ENCODE measurements at regions of chr1 and their contacts with region 1.

Region 1: GRCh38 chr1:183685112-183685713 is 32.1 kb upstream of the APOBEC4 start:
- DNase-seq: peak; percentile 45
- ATAC-seq: peak; percentile 83
- H3K4me3 ChIP-seq: no peak overlapping the region
- H3K27ac ChIP-seq: no peak overlapping the region
- H3K4me1 ChIP-seq: no peaks in the 10 kb centered on the region
- H3K27me3 ChIP-seq: no peaks in the 10 kb centered on the region
- CTCF ChIP-seq: peak; percentile 65 to 83 (median 75)
- POLR2A ChIP-seq: no peak
- RAD21 ChIP-seq: peak; percentile 83

Region 2: DNA sequence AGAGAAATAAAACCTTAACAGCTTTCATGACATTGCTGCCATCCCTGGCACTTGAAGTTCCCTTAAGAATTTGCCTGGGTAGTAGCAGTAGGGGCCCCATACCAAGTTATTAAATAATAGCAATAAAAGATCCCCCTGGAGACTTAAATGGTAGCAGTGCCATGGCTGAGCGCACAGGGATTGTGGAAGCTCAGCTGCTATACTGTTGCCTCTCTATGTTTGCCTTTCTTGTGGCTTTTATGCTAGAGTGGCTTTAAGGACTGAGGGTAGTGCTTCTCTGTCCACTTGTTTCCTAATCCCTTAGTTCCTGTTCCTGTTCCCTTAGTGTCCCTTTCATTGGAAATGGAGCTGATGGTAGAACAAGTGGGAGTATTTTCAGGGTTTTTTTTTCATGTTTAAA is 137.1 kb before region 1 on chr1:
- CTCF ChIA-PET with region 1: no interaction called
- POLR2A ChIA-PET with region 1: no interaction called
- RAD21 ChIA-PET with region 1: no interaction called
- intact Hi-C with region 1: no loop called
- DNase-seq: no peak
- ATAC-seq: no peak
- H3K4me3 ChIP-seq: no peak overlapping the region
- H3K27ac ChIP-seq: no peak overlapping the region
- H3K4me1 ChIP-seq: peaks cover 0 to 3% of the 10 kb centered on the region in 2 experiments; a peak in 1 of 4 replicates
- H3K27me3 ChIP-seq: no peaks in the 10 kb centered on the region
- CTCF ChIP-seq: no peak
- POLR2A ChIP-seq: no peak
- RAD21 ChIP-seq: no peak

Region 3: DNA sequence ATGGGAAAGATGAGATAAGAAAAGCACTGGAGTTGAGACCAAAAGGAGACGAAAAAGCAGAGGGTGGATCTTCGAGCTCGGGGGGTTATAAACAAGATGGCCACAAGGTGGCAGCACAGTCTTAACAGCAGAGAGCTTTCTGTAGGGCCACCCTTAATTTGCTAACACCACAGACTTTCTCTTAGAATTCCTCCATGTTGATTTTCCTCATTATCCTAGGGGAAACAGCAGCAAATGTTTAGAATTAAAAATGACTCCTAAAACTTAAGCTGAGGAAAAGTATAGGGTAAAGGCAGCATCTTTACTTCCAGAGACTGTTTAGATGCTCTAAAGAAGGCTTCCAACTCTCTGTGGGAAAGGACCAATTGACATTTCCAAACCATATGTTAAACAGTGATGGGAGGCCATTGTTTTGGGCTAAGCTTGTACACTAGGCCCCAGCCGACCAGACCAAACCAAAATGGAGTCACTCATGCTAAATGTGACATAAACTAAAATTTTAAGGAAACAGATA is 29.6 kb before region 1 on chr1:
- CTCF ChIA-PET with region 1: interaction called, 40 read pairs
- POLR2A ChIA-PET with region 1: interaction called, 3 read pairs
- RAD21 ChIA-PET with region 1: interaction called in 1 of 2 experiments, 3 read pairs
- intact Hi-C with region 1: loop called (anchors 1 kb)
- DNase-seq: peak; percentile 69
- ATAC-seq: peak; percentile 96
- H3K4me3 ChIP-seq: no peak overlapping the region
- H3K27ac ChIP-seq: no peak overlapping the region
- H3K4me1 ChIP-seq: 0 out of 4 replicates have a peak, but pooled peaks cover 0 to 3% of the 10 kb centered on the region in 2 experiments
- H3K27me3 ChIP-seq: no peaks in the 10 kb centered on the region
- CTCF ChIP-seq: peak; percentile 78 to 84 (median 84)
- POLR2A ChIP-seq: no peak
- RAD21 ChIP-seq: peak; percentile 89

Region 4: DNA sequence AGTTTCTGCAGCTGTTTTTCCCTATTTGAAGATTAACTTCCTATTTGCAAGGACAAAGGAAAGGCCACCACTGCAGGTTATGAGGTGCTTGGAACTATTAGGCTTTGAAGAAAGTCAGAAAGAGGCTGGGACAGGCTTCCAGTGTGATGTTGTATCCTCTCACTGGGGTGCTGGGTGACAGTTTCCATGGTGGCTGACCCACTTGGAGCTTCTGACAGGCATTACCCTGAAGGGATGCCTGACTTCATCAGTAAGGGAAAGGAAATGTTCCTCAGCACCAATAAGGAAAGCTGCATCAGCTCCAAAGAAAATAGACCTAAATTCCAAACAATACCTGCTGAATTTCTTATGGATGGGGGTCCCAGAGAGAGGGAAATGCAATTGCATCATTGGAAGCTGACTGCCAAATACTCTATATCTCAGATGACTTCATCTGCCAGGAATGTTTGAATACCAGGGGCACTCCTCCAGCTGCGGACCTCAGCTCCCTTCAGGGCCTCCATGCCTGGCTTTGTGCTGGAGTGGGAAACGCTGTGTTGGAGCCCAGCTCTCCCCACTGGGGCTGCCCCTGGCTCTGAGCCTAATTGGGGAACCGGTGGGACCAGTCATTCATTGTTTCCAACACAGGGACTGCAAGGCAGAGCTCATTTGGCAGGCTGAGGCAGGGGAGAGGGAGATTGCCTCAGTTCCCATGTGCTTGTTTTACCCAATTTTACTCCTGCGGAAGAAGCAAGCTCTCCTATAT is 196.3 kb after region 1 on chr1:
- CTCF ChIA-PET with region 1: no interaction called
- POLR2A ChIA-PET with region 1: no interaction called
- RAD21 ChIA-PET with region 1: no interaction called
- intact Hi-C with region 1: no loop called
- DNase-seq: no peak
- ATAC-seq: peak; percentile 67
- H3K4me3 ChIP-seq: no peak overlapping the region
- H3K27ac ChIP-seq: no peak overlapping the region
- H3K4me1 ChIP-seq: peaks cover 4 to 10% of the 10 kb centered on the region in 2 experiments; a peak in 2 of 4 replicates
- H3K27me3 ChIP-seq: no peaks in the 10 kb centered on the region
- CTCF ChIP-seq: no peak
- POLR2A ChIP-seq: no peak
- RAD21 ChIP-seq: no peak

Measured in HCT116 (cell line).